Pancreas (tissue), 10 donors: ENCODE measurements at regions of chr2 and their contacts with region 1.

Region 1: DNA sequence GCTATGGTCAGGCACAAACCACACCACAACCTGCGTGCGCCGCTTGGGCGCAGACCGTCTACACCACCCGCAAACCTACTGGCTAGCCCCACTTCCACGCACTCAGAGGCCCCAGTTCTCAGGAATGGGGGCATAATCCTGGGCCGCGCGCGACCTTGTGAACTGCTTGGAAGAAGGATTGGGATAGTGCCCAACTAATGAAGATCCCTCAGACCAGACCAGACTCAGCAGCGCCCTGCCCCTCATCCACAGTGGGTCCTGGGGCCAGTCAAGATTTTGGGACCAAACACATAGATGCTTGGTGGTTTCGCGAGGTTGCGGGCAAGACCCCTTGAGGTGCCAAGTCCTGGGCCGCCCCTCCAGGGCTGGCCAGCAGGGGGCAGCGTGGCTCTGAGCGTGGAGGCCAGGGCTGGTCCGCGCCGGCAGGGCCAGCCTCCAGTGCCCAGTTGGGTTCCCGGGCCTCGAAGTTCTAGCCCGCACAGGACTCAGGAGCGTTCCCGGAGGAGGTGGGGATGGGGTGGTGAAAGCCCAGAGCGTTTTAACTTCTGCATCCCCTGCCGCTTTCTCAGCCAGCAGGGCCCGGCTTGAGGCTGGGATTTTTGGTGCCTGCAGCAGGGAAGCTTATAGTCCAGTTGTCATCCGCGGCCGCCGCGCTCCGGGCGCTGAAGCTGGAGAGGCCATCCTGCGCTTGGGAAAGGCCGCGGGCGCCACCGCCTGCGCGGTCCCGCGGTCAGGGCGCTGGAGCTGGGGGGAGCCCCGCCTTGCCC is 8.3 kb downstream of the OSR1 start:
- DNase-seq: peak; percentile 45 to 86 (median 74)
- ATAC-seq: peak; percentile 30 to 55 (median 44)
- H3K4me3 ChIP-seq: peak overlapping the region in 3 of 4 donors; percentile 13 to 36 (median 28)
- H3K27ac ChIP-seq: no peak overlapping the region
- H3K4me1 ChIP-seq: peaks cover 11 to 21% (median 12%) of the 10 kb centered on the region in 3 donors
- H3K27me3 ChIP-seq: peaks cover 0 to 28% (median 9%) of the 10 kb centered on the region in 4 donors
- CTCF ChIP-seq: peak; percentile 60 to 71 (median 63)

Region 2: DNA sequence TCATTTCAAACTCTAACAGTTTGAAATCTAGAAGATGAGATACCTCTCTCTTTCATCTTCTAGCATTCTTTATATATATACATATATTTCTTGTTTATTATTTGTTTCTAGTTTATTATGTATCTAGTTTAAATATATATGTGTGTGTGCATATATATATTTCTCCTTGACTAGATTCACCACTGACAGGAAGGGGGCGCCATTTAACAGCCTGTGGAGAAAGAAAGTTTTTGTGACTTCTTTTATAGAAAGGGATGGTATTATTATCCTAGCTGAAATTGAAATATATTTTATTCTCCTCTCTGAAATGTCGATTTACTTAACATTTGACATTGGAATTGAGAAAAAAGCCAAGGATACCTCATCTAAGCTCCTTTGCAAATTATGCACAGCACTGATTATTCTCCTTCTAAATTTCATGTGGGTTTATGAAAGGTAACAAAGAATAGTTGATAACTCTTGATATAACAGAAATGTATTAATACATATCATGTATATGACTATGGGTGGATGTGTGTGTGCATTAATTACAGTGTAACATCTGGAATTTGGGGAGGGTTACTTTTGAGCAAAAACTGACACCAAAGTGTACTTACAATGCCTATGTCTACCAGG is 600.1 kb before region 1 on chr2:
- intact Hi-C with region 1: loop called in 1 of 3 experiments (anchors 10 kb)
- DNase-seq: peak in 3 of 6 donors; percentile 7 to 61 (median 35)
- ATAC-seq: peak in 3 of 4 donors; percentile 58 to 72 (median 70)
- H3K4me3 ChIP-seq: no peak overlapping the region
- H3K27ac ChIP-seq: no peak overlapping the region
- H3K4me1 ChIP-seq: no peaks in the 10 kb centered on the region
- H3K27me3 ChIP-seq: no peaks in the 10 kb centered on the region
- CTCF ChIP-seq: peak in 3 of 4 donors; percentile 43 to 60 (median 48)